MCF 10A (cell line): ENCODE measurements at regions of chr5 and their contacts with region 1.

Region 1: DNA sequence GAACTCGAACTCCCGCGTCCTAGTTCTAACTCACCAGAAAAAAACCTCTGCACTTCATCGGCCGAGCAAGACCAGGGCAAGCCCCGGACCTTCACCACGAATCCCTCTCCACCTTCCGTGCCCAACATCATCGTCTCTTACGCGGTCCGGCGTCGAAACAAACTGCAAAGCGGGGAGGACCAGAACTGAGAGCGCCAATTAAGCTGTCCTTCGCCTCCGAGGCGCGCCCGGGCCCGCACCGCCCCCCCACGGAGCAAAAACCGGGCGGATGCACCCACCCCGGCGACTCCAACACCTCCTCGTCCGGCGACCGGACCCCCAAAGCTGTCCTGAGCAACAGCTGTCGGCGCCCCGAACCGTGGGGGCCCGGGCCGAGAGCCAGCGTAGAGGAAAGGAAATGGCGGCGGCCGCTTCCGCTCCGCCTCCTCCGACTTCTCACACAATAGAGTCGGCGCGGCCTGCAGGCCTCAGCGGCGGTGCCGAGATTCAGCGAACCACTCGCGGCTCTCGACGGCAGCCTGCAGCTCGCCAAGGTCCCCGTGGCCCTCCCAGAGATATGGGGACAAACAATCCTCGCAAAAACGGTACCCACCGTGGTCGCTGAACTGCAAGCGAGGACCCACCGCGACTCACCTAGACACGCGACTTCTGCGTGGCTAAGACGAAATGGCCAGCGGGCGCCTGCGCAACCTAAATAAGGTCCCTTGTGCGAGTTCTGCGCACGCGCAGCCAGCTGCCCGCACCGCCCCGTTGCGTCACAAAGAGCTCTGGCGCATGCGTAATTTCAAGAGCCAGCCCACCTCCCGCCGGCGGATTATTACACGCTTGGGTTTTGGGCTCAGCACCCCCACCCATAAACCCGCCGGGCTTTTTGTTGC is at the start of gene HNRNPH1:
- DNase-seq: peak; percentile 100
- H3K4me3 Mint-ChIP-seq: peak within 1 kb of the TSS; percentile 98
- H3K27ac Mint-ChIP-seq: peak within 1 kb of the TSS; percentile 99
- H3K4me1 Mint-ChIP-seq: peaks cover 46% of the 10 kb centered on the region
- H3K27me3 Mint-ChIP-seq: no peaks in the 10 kb centered on the region
- CTCF ChIP-seq: no peak
- total RNA-seq, gene HNRNPH1: 907 and 981 TPM in 2 replicates

Region 2: DNA sequence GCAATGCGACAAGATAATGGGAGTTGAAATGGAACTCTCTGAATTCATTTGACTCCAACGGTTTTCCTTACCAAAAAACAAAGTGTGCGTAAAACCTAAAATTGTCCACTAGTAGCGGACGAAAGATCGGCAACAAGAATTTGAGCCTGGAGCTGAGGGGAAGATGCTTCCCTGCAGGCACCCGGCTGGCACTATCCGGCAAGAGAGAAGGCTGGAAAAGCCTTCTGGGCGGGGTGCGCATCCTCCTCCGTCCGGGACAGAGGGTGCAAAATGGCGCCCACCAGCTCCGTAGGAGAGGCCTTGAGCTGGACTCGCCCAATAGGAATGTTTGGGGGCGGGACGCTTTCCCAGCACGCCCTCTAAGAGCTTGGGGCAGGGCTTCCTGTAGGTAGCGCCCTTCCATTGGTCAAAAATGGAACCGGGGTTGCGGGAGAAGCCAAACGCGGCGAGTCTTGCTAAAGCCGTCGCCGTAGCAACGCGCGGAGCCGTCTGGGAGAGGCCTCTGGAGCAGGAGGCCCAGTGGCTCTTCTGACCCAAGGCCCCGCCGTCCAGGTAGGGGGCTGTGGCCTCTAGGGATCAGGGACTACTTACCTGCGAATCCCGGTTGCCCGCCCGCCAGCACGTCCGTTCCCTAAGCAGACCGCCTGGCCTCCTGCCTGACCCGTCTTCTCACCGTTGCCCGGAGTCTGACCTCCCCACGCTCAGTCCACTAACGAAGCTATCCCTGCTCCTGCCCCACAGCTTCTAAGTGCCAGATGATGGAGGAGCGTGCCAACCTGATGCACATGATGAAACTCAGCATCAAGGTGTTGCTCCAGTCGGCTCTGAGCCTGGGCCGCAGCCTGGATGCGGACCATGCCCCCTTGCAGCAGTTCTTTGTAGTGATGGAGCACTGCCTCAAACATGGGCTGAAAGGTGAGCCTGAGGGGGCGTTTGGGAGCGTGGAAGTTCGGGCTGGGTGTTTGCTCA is 63.7 kb before region 1 on chr5:
- CTCF ChIA-PET with region 1: interaction called, 5 read pairs
- POLR2A ChIA-PET with region 1: interaction called, 71 read pairs
- intact Hi-C with region 1: loop called (anchors 1 kb)
- DNase-seq: peak; percentile 100
- H3K4me3 Mint-ChIP-seq: peak overlapping the region; percentile 98
- H3K27ac Mint-ChIP-seq: peak overlapping the region; percentile 98
- H3K4me1 Mint-ChIP-seq: peaks cover 19% of the 10 kb centered on the region
- H3K27me3 Mint-ChIP-seq: no peaks in the 10 kb centered on the region
- CTCF ChIP-seq: no peak

Region 3: DNA sequence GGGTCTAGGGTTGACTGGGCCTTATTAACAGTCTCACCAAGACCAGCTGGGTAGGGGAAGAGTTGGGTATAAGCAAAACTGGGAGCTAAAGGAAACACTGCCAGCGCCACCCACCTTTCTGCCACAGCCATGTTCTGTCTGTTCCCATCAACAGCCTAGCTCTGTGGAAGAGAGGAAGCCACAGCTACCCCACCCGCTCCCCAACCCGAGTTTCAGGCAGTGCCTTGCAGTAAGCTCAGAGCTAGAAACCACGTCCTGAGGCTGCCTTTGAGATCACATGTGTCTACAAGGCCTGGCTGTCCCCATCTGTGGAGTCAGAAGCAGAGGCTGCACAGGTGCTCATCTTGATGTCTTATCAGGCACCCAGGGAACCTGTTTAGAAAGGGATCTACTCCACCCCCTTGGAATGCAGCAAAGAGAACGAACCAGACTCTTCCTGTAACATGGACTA is 15.1 kb before region 1 on chr5:
- CTCF ChIA-PET with region 1: interaction called, 8 read pairs
- POLR2A ChIA-PET with region 1: interaction called, 197 read pairs
- intact Hi-C with region 1: no loop called
- DNase-seq: no peak
- H3K4me3 Mint-ChIP-seq: no peak overlapping the region
- H3K27ac Mint-ChIP-seq: no peak overlapping the region
- H3K4me1 Mint-ChIP-seq: peaks cover 14% of the 10 kb centered on the region
- H3K27me3 Mint-ChIP-seq: no peaks in the 10 kb centered on the region
- CTCF ChIP-seq: no peak

Region 4: DNA sequence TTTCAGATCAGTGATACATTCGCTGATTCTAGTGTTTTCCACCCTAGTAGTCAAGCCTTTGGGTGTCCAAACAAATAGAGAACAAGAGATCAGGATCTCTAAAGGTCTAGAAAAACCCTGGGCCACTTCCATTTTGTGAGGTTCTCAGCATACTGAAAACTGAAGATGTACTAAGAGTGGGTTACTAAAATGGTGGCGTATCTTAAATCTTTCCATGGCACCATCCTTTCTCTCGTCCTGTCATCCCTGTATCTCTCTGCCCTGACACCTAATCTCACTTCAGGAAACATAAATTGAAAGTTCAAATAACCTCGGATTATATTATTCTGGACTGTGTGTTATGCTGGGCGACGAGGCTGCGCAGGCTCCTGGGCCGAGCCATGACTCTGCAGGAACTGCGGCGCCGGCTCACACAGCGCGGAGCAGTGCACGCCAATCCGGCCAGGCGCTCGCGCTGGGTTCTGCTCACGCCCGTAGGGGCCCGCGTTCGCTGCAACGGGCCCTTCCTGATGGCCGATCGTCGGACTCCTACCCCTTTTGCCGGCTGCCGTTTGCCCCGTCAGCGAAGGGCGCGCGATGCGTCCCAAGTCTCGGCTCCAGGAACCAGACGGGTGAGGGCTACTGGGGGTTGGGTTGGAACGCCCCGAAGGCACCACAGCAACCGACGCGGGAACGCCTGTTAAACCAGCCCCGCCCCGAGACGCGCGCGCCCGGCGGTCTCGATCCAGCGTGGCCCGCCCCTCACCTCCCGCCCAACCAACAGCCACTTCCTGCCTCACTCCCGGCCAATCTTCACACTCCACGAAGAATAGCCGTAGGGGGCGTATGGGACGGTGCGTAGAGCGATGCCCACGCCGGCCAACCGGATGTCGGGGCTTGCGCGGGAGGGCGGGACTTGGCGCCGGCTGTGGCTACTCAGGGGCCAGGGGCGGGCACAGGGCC is 75.0 kb after region 1 on chr5:
- CTCF ChIA-PET with region 1: interaction called, 3 read pairs
- POLR2A ChIA-PET with region 1: interaction called, 61 read pairs
- intact Hi-C with region 1: loop called (anchors 1 kb)
- DNase-seq: peak; percentile 100
- H3K4me3 Mint-ChIP-seq: peak overlapping the region; percentile 94
- H3K27ac Mint-ChIP-seq: peak overlapping the region; percentile 99
- H3K4me1 Mint-ChIP-seq: peaks cover 29% of the 10 kb centered on the region
- H3K27me3 Mint-ChIP-seq: no peaks in the 10 kb centered on the region
- CTCF ChIP-seq: no peak

Region 5: DNA sequence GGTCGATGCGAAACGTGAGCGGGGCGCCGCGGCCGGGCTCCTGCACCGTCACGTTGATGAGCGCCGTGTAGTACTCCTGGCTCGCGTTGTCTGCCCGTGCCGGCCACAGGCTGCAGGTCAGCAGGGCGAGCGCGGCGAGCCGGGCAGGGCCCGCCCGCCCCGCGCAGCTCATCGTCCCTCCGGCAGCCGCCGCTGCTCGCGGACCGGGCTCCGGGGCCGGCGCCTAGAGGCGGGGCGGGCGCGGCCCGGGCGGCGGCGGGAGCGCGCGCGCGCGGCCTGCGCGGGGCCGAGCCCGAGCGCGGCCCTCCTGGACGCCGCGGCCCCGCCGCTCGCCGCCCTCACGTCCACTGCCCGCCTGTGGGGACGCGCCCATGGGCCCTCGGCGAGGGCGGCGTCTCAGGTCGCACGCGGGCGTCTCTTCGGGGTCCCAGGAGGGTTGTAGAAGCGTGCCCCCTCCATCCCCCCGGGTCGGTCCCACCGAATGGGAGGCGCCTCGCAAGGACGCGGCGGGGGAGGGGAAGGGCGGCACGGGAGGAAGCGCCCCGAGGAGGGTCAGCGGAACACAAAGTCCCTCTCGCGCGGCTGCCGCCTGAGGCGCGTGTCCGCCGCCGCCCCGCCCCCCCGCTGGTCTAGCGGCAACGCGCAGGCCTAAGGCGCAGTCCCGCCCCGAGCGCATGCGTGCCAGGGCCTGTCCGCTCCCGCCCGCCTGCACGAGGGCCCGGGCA is 448.5 kb after region 1 on chr5 and contains the start of gene RNF130:
- CTCF ChIA-PET with region 1: no interaction called
- POLR2A ChIA-PET with region 1: no interaction called
- intact Hi-C with region 1: loop called (anchors 10 kb)
- DNase-seq: peak; percentile 94
- H3K4me3 Mint-ChIP-seq: peak within 1 kb of the TSS; percentile 95
- H3K27ac Mint-ChIP-seq: peak within 1 kb of the TSS; percentile 87
- H3K4me1 Mint-ChIP-seq: peaks cover 23% of the 10 kb centered on the region
- H3K27me3 Mint-ChIP-seq: no peaks in the 10 kb centered on the region
- CTCF ChIP-seq: no peak
- total RNA-seq, gene RNF130: 31.8 and 34.0 TPM in 2 replicates

Region 6: GRCh38 chr5:180304431-180305375 is 681.5 kb after region 1 on chr5:
- CTCF ChIA-PET with region 1: no interaction called
- POLR2A ChIA-PET with region 1: no interaction called
- intact Hi-C with region 1: no loop called
- DNase-seq: no peak
- H3K4me3 Mint-ChIP-seq: no peak overlapping the region
- H3K27ac Mint-ChIP-seq: no peak overlapping the region
- H3K4me1 Mint-ChIP-seq: no peaks in the 10 kb centered on the region
- H3K27me3 Mint-ChIP-seq: peaks cover 12% of the 10 kb centered on the region
- CTCF ChIP-seq: no peak